Activated naive CD4-positive, alpha-beta T cell treated with anti-CD3 and anti-CD28 coated beads for 36 hours (primary cell): ENCODE measurements at regions of chr9 and their contacts with region 1.

Region 1: GRCh38 chr9:128081056-128081455 is 13.0 kb downstream of the SLC25A25 start:
- DNase-seq: no peak
- H3K4me3 Mint-ChIP-seq: no peak overlapping the region
- H3K27ac Mint-ChIP-seq: no peak overlapping the region
- H3K4me1 Mint-ChIP-seq: peaks cover 49% of the 10 kb centered on the region
- H3K27me3 Mint-ChIP-seq: no peaks in the 10 kb centered on the region

Region 2: DNA sequence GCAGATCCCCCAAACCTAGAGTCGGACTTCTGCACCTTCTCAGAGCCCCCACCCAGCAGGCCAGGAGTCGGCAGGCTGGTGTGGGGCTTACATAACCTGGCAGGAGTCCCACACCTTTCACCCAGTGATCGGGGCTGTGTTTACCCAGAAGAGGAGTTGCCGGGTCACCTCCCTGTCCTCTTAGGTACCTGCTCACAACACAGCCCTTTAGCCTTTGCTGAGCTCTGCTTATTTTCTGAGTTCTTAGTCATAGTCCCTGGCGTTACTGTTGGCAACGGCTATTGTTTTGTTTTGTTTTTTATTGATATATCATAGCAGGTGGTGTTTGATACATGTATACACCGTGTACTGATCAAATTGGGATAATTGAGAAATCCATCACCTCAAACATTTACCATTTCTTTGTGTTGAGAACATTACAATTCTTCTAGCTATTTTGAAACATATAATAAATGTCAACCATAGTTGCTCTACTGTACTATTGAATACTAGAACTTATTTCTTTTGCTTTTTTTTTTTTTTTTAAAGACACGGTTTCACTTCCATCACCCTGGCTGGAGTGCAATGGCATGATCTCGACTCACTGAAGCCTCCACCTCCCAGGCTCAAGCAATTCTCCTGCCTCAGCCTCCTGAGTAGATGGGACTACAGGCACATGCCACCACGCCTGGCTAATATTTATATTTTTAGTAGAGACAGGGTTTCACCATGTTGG is 89.9 kb before region 1 on chr9:
- CTCF ChIA-PET with region 1: no interaction called
- intact Hi-C with region 1: no loop called
- DNase-seq: no peak
- H3K4me3 Mint-ChIP-seq: no peak overlapping the region
- H3K27ac Mint-ChIP-seq: no peak overlapping the region
- H3K4me1 Mint-ChIP-seq: peaks cover 28% of the 10 kb centered on the region
- H3K27me3 Mint-ChIP-seq: no peaks in the 10 kb centered on the region

Region 3: DNA sequence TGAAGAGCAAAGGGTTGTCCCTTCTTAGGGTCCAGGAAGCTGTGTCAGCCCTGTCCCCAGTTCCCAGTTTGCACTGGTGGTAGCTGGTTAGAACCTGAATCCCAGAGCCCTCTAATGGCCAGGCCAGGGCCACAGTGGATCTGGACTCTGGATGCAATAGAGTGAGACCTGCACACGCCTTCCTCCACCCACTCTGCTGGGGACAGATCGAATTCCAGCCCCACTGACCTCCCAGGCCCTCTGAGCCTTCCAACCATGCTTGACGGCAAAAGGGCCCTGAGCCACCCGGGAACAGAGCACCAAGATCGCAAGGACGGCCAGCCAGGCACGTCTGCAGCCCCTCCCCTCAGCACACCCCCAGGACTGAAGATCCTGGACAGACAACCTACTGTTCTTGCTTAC is 37.6 kb before region 1 on chr9:
- CTCF ChIA-PET with region 1: interaction called, 3 read pairs
- intact Hi-C with region 1: loop called (anchors 5 kb)
- DNase-seq: no peak
- H3K4me3 Mint-ChIP-seq: no peak overlapping the region
- H3K27ac Mint-ChIP-seq: no peak overlapping the region
- H3K4me1 Mint-ChIP-seq: peaks cover 2% of the 10 kb centered on the region
- H3K27me3 Mint-ChIP-seq: no peaks in the 10 kb centered on the region

Region 4: GRCh38 chr9:129208207-129209032 is 1127.4 kb after region 1 on chr9:
- CTCF ChIA-PET with region 1: no interaction called
- intact Hi-C with region 1: no loop called
- DNase-seq: peak; percentile 70
- H3K4me3 Mint-ChIP-seq: peak overlapping the region; percentile 49
- H3K27ac Mint-ChIP-seq: peak overlapping the region; percentile 70
- H3K4me1 Mint-ChIP-seq: peaks cover 28% of the 10 kb centered on the region
- H3K27me3 Mint-ChIP-seq: no peaks in the 10 kb centered on the region